Activated CD4-positive, alpha-beta T cell treated with anti-CD3 and anti-CD28 coated beads, Interleukin-2, amount 10 ng/mL, durations not matched to agents 24 days and 14 days (primary cell): ENCODE measurements at regions of chr3 and their contacts with region 1.

Region 1: DNA sequence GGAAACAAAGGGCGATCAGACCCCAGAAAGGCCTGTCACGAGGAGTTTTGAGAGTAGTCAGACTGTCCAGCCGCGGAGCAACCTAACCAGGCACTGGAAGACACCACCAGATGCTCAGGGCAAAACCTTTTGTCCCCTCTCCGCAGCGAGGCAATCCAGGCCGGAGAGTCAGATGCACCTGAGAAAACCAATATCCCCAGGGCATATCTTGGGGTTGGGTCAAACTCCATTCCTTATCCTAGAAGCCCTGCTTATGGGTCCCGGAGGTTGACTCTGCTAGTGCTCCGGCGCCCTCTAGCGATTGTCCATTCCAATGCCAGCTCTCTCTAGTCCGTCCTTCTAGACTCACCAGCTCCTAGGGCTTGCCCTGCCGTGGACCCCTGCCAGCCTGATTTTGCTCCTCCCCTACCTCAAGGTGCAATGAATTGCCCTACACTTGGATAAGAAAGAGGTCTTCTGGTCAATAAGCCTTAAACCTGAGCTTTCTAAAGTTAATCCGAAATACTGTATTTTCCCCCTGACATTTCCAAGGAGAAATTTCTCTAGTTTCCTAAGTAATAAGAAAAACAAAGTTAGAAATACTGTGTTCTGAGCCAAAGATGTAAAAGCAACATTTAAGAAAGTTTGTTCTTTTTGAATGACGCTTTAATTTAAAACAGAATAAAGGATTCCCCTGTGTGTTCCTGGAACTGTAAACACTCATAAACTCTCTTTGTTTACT is 5.5 kb downstream of the CPNE4 start:
- DNase-seq: peak; percentile 87
- H3K4me3 Mint-ChIP-seq: no peak overlapping the region
- H3K27ac Mint-ChIP-seq: no peak overlapping the region
- H3K4me1 Mint-ChIP-seq: peaks cover 3% of the 10 kb centered on the region
- H3K27me3 Mint-ChIP-seq: peaks cover 37% of the 10 kb centered on the region

Region 2: DNA sequence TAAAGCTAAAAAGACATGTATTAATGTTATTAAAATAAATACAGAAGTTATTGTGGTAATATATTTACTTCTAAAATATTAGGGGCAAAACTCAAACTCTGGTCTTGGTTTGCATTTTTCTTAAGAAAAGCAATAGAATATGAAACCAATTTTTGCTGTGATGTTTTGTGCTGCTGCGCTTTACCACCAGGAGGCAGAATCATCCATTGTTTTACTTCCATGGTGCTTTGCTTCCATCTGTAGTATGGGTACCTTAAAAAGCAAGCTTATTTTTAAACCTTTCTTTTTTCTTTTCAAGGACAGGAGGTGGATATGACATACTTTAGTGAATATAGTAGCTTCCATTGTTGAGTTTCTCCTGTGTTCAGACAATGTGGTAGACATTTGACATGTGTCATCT is 480.0 kb before region 1 on chr3:
- intact Hi-C with region 1: loop called (anchors 2 kb)
- DNase-seq: peak; percentile 60
- H3K4me3 Mint-ChIP-seq: no peak overlapping the region
- H3K27ac Mint-ChIP-seq: no peak overlapping the region
- H3K4me1 Mint-ChIP-seq: peaks cover 11% of the 10 kb centered on the region
- H3K27me3 Mint-ChIP-seq: peaks cover 18% of the 10 kb centered on the region

Region 3: DNA sequence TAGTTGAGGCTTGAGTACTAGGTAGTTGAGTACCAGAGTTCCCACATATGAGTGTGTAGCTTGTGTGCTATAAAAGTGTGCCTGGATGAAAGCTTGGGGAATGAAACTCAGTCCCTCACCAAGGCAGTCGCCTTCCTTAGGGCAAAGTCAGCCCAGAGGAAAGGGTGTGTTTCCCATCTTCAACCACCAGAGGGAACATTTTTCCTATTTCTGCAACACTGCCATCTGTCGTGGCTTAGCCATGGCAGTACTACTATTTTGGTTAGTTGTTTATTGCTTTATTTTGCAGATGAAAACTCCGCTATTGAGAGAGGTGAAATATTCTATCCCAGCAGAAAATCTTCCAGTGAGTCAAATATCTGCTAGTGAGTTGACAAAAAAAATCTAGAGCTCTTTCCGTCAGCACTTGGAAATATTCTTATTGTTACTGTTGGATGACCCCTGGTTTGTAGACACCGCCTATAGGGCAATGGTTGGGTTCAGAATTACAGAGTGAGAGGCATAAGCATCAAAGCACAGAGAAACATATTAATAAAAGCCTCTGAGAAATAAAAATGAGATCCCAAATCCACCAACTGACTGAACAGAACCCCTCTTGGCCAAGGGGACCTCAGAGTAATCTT is 234.5 kb before region 1 on chr3:
- intact Hi-C with region 1: loop called (anchors 1 kb)
- DNase-seq: peak; percentile 75
- H3K4me3 Mint-ChIP-seq: no peak overlapping the region
- H3K27ac Mint-ChIP-seq: no peak overlapping the region
- H3K4me1 Mint-ChIP-seq: peaks cover 5% of the 10 kb centered on the region
- H3K27me3 Mint-ChIP-seq: peaks cover 10% of the 10 kb centered on the region